Transverse colon (tissue), 4 donors: ENCODE measurements at regions of chr12 and their contacts with region 1.

Region 1: GRCh38 chr12:64890873-64891468 is 66.5 kb downstream of the TBC1D30 start:
- DNase-seq: no peak
- H3K4me3 ChIP-seq: no peak overlapping the region
- H3K27ac ChIP-seq: no peak overlapping the region
- H3K4me1 ChIP-seq: no peaks in the 10 kb centered on the region
- H3K27me3 ChIP-seq: no peaks in the 10 kb centered on the region
- CTCF ChIP-seq: peak; percentile 70 to 89 (median 81)
- EP300 ChIP-seq: no peak
- POLR2A ChIP-seq: no peak

Region 2: GRCh38 chr12:65113621-65114035 is 222.7 kb after region 1 on chr12:
- in situ Hi-C with region 1: loop called (anchors 10 kb)
- intact Hi-C with region 1: no loop called
- DNase-seq: no peak
- H3K4me3 ChIP-seq: no peak overlapping the region
- H3K27ac ChIP-seq: no peak overlapping the region
- H3K4me1 ChIP-seq: no peaks in the 10 kb centered on the region
- H3K27me3 ChIP-seq: peaks cover 12% of the 10 kb centered on the region
- CTCF ChIP-seq: no peak
- EP300 ChIP-seq: no peak
- POLR2A ChIP-seq: no peak

Region 3: DNA sequence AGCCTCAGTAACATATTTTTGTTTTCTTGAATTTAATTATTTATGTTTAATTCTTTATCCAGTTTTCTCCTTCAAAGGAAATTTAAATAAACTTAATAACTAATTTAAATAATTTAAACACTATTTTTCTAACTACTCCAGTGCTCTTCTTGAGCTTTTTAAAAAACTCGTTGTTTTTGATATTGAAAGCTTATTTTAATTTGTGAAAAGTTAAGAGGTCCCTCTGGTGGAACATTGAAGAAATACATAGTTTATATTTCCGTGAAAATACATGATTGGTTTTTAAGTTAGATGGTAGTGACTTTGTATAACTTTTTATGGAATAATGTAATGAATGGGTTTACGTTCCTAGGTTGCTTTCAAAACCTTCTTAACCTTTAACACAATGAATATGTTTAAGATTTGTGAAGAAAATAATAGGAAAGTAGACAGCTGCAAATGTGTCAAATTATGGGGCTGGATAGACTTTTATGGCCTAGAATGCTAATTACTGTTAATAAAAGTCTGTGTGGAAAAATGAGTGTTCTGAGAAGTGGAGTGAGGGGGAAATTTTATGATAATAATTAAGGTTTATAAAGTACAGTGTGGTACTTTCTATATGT is 341.6 kb after region 1 on chr12:
- in situ Hi-C with region 1: loop called in 3 of 4 experiments (anchors 10 to 25 kb)
- intact Hi-C with region 1: no loop called
- DNase-seq: no peak
- H3K4me3 ChIP-seq: no peak overlapping the region
- H3K27ac ChIP-seq: no peak overlapping the region
- H3K4me1 ChIP-seq: peaks cover 0 to 9% (median 0%) of the 10 kb centered on the region in 4 donors
- H3K27me3 ChIP-seq: no peaks in the 10 kb centered on the region
- CTCF ChIP-seq: peak; percentile 46 to 56 (median 48)
- EP300 ChIP-seq: no peak
- POLR2A ChIP-seq: no peak

Region 4: DNA sequence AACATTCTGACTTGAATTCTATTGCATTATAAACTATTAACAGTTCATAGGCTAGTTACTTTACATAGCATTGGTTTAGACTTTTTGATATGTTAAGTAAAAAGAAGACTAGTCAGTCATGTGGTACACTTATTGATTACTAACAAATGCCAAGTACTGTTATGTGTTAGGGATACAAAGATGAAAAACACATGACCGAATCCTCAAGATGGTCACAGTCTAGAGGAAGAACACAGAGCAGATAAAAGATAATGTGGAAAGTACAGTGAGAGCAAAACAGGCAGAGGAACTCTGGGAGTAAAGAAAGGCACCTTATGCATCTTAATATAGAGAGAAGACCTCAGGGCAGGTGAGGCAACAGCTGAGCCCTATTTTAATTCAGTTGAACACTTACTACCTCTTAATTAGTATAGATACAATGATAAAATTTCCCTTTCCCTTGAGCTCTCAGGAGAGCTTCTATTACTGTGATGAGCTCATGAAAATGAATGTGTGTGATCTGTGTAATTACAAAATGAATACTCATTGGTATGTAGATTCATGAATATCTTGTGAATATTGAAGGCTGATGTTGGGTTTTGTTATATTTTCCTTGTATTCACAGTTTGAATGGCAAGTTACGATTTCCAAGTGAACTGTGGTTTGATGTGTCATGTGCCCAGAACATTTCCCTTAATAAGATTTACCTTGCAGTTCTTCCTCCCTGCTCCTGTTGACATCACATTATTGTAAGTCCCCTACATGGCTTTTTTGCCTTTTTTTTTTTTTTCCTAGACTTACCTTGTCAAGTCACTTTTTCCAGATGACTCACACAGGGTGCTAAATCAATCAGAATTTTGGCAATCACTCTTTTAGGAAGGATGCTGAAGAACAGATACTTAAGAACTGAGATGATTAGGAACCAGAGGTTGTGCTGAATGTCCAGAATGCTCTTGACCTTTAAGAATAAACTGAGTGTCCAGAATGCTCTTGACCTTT is 358.0 kb after region 1 on chr12:
- in situ Hi-C with region 1: loop called in 3 of 4 experiments (anchors 10 to 25 kb)
- intact Hi-C with region 1: no loop called
- DNase-seq: no peak
- H3K4me3 ChIP-seq: no peak overlapping the region
- H3K27ac ChIP-seq: no peak overlapping the region
- H3K4me1 ChIP-seq: no peaks in the 10 kb centered on the region
- H3K27me3 ChIP-seq: no peaks in the 10 kb centered on the region
- CTCF ChIP-seq: no peak
- EP300 ChIP-seq: no peak
- POLR2A ChIP-seq: no peak

Region 5: GRCh38 chr12:65999564-66000280 is 1108.8 kb after region 1 on chr12:
- in situ Hi-C with region 1: loop called in 1 of 4 experiments (anchors 25 kb)
- intact Hi-C with region 1: no loop called
- DNase-seq: no peak
- H3K4me3 ChIP-seq: no peak overlapping the region
- H3K27ac ChIP-seq: no peak overlapping the region
- H3K4me1 ChIP-seq: no peaks in the 10 kb centered on the region
- H3K27me3 ChIP-seq: no peaks in the 10 kb centered on the region
- CTCF ChIP-seq: no peak
- EP300 ChIP-seq: no peak
- POLR2A ChIP-seq: no peak

Region 6: DNA sequence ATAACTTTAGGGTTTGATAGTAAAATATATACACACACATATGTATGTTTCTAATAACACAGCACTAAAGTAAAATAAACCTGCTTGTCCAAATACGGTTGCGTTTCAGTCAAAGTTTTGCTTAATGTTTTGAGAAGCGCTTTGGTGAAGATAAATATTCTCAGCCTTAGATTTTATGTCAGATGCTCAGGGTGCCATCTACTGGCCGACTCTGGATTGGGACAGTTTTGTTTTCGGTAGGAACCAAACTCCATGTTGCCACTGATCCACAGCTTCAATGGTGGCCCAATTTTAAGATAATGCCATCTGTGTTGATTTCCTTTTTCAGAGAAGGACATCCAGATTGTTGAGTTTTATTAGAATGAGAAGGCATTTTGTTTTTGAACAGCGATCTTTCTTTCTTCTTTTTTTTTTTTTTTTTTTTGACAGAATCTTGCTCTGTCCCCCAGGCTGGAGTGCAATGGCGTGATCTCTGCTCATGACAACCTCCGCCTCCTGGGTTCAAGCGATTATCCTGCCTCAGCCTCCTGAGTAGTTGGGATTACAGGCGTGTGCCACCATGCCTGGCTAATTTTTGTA is 1196.5 kb after region 1 on chr12:
- in situ Hi-C with region 1: loop called (anchors 10 to 25 kb)
- intact Hi-C with region 1: loop called (anchors 10 kb)
- DNase-seq: peak; percentile 62
- H3K4me3 ChIP-seq: no peak overlapping the region
- H3K27ac ChIP-seq: no peak overlapping the region
- H3K4me1 ChIP-seq: no peaks in the 10 kb centered on the region
- H3K27me3 ChIP-seq: no peaks in the 10 kb centered on the region
- CTCF ChIP-seq: peak; percentile 59 to 69 (median 61)
- EP300 ChIP-seq: no peak
- POLR2A ChIP-seq: no peak